A673 (cell line): ENCODE measurements at regions of chr15 and their contacts with region 1.

Region 1: GRCh38 chr15:90265271-90266060 is at the start of gene NGRN:
- DNase-seq: peak; percentile 95
- H3K4me3 ChIP-seq: peak within 1 kb of the TSS; percentile 59
- H3K27ac ChIP-seq: peak within 1 kb of the TSS; percentile 91
- H3K4me1 ChIP-seq: peaks cover 17% of the 10 kb centered on the region
- H3K27me3 ChIP-seq: no peaks in the 10 kb centered on the region
- CTCF ChIP-seq: no peak
- total RNA-seq, gene NGRN: 125 and 135 TPM in 2 replicates

Region 2: DNA sequence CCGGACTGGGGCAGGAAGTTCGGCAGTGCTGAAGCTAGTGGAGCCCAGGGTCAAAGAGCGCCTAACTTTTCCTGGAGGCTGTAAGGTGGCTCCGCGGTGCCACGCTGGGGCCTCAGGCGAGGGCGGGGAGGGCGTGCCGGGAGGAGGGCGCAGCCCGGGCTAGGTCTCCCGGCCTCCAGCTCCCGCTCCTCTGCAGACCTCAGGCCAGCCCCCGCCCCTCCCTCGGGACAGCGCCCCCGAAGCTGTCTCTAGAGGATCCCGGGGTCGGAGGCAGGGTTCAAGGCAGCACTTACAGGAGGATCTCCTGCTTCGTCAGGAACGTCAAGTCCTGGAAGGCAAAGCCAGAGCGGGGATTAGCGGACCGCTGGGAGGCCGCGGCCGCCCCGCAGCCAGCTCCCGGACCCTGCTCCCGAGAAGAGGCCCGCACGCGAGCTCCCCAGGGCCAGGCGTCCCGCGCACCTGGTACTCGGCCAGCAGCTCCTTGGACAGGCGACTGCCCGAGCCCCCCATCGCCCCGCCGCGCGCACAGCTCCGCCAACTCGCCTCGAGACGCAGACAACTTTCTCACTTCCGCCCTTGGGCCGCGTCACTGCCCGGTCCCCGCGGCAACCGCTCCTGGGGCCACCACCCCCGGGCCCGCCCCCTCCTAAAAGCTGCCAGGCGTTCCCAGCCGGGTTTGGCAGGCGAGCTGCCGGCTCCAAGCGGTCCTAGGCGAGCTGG is 31.9 kb before region 1 on chr15 and contains the start of gene CIB1:
- CTCF ChIA-PET with region 1: no interaction called
- POLR2A ChIA-PET with region 1: no interaction called
- intact Hi-C with region 1: loop called (anchors 1 kb)
- DNase-seq: peak; percentile 98
- H3K4me3 ChIP-seq: peak within 1 kb of the TSS; percentile 58
- H3K27ac ChIP-seq: peak within 1 kb of the TSS; percentile 66
- H3K4me1 ChIP-seq: peaks cover 5% of the 10 kb centered on the region
- H3K27me3 ChIP-seq: no peaks in the 10 kb centered on the region
- CTCF ChIP-seq: no peak
- total RNA-seq, gene CIB1: 39.7 and 41.9 TPM in 2 replicates

Region 3: DNA sequence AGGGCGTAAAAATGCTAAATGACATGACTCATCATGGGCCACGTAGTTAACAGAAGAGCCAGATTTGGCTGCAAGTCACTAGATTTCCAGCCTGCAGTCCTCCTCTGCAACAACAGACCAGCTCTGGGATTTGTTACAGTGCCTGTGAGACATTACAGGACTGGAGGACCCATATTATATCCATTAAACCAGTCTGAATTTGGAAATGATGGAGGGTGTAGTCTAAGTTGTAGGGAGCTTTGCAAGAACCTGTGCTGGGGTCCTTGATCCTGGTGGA is 97.4 kb after region 1 on chr15:
- CTCF ChIA-PET with region 1: no interaction called
- POLR2A ChIA-PET with region 1: no interaction called
- intact Hi-C with region 1: no loop called
- DNase-seq: peak; percentile 62
- H3K4me3 ChIP-seq: no peak overlapping the region
- H3K27ac ChIP-seq: no peak overlapping the region
- H3K4me1 ChIP-seq: peaks cover 11% of the 10 kb centered on the region
- H3K27me3 ChIP-seq: no peaks in the 10 kb centered on the region
- CTCF ChIP-seq: no peak